ENCODE measurements at regions of chr16 and their contacts with region 1.

Region 1: DNA sequence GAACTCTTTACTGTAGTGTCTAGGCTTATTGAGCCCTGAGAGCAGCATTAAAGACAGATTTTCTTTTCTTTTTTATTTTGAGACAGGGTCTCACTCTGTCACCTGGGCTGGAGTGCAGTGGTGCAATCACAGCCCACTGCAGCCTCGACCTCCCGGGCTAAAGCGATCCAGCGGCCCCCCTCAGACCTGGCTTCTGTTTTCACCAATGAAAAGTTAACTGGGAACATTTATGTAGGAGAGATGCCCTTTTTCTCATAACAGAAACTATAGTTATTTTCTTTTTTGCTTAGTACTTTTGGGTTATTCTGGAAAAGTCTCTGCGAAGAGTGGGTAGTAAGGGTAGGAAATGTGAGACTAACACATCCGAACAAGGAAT is 1.5 kb downstream of the MAP1LC3B start:
- DNase-seq: no peak
- H3K4me3 Mint-ChIP-seq: peak overlapping the region; percentile 85
- H3K27ac Mint-ChIP-seq: peak overlapping the region; percentile 88
- H3K4me1 Mint-ChIP-seq: peaks cover 39% of the 10 kb centered on the region
- H3K27me3 Mint-ChIP-seq: no peaks in the 10 kb centered on the region

Region 2: GRCh38 chr16:87263471-87263961 is 130.2 kb before region 1 on chr16:
- CTCF ChIA-PET with region 1: no interaction called
- intact Hi-C with region 1: no loop called
- DNase-seq: no peak
- H3K4me3 Mint-ChIP-seq: no peak overlapping the region
- H3K27ac Mint-ChIP-seq: no peak overlapping the region
- H3K4me1 Mint-ChIP-seq: no peaks in the 10 kb centered on the region
- H3K27me3 Mint-ChIP-seq: no peaks in the 10 kb centered on the region

Region 3: DNA sequence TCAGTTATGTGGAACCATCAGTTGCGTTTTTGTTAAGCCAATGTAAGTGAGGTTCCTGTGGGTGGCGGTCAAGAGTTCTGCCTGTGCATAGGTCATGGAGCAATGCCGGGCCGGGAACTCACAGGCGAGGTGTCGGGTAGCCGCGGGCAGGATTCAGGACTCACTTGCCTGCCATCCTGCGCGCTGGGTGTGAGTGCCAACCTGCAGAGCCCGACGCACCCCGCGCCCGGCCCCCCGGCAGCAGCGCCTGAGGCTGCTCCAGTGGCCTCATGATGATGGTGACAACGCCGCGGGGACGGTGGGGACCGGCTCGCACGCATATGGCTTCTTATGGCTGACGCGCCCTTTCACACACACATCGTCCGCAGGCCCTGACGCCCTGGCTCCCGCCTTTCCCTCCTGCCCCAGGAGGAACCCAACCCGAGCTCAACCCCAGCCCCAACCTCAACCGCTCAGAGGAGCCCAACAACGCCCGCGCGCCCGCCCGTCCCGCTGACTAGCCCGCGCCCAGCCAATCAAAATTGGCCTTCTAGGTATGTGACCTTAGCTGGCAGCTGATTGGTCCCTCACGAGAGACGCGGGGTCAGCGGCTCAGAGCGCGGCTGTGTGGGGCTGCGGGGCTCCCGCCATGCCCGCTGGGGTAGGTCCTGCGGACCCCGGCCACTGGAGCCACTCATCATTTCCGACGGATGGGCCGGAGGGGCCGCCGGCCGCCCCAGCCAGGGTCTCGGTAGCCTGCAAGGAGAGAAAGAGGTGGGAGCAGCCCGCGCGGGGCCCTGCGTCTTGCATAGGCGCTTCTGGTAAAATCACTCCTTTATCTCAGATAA is 76.5 kb before region 1 on chr16 and contains the start of gene C16orf95:
- CTCF ChIA-PET with region 1: interaction called, 16 read pairs
- intact Hi-C with region 1: loop called (anchors 1 kb)
- DNase-seq: peak; percentile 98
- H3K4me3 Mint-ChIP-seq: peak within 1 kb of the TSS; percentile 88
- H3K27ac Mint-ChIP-seq: peak within 1 kb of the TSS; percentile 91
- H3K4me1 Mint-ChIP-seq: peaks cover 17% of the 10 kb centered on the region
- H3K27me3 Mint-ChIP-seq: no peaks in the 10 kb centered on the region
- total RNA-seq, gene C16orf95: 17.2 to 23.4 TPM

Region 4: GRCh38 chr16:87324411-87325275 is 69.0 kb before region 1 on chr16:
- CTCF ChIA-PET with region 1: interaction called, 3 read pairs
- intact Hi-C with region 1: loop called (anchors 1 kb)
- DNase-seq: peak; percentile 52
- H3K4me3 Mint-ChIP-seq: no peak overlapping the region
- H3K27ac Mint-ChIP-seq: no peak overlapping the region
- H3K4me1 Mint-ChIP-seq: peaks cover 2% of the 10 kb centered on the region
- H3K27me3 Mint-ChIP-seq: no peaks in the 10 kb centered on the region